GM23248 (cell line): ENCODE measurements at regions of chr2 and their contacts with region 1.

Region 1: GRCh38 chr2:10057231-10058107 is 14.1 kb downstream of the KLF11 start:
- DNase-seq: peak; percentile 90
- H3K4me3 ChIP-seq: peak overlapping the region; percentile 59
- H3K27ac ChIP-seq: peak overlapping the region; percentile 67
- H3K4me1 ChIP-seq: peaks cover 13% of the 10 kb centered on the region
- H3K27me3 ChIP-seq: no peaks in the 10 kb centered on the region

Region 2: GRCh38 chr2:9813312-9814133 is 243.9 kb before region 1 on chr2:
- in situ Hi-C with region 1: loop called (anchors 10 kb)
- DNase-seq: peak; percentile 81
- H3K4me3 ChIP-seq: peak overlapping the region; percentile 56
- H3K27ac ChIP-seq: no peak overlapping the region
- H3K4me1 ChIP-seq: peaks cover 9% of the 10 kb centered on the region; the same call in 1 of the 2 replicates
- H3K27me3 ChIP-seq: no peaks in the 10 kb centered on the region